ENCODE measurements at regions of chr9 and their contacts with region 1.

Region 1: DNA sequence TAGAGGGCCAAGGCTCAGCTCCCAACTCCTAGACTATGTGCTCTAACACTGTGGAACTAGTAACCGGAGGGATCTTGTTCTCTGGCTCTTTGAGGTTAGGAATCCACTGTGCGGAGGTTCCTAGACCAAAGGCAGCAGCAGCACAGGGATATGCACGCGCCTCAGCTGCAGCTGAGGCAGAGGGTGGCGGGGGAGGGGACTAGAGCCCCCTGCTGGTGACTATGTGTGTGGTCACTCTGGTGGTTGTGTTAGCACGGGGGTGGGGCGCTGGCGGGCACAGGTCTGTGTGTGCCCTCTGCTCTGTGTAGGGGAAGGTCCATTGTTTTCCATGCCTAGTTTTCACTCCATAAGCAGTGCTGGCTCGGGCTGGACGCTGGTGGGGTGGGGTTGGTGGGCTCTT is 458.0 kb upstream of the IZUMO3 start:
- DNase-seq: no peak
- H3K4me3 ChIP-seq: no peak overlapping the region
- H3K27ac ChIP-seq: no peak overlapping the region
- H3K4me1 ChIP-seq: no peaks in the 10 kb centered on the region
- H3K27me3 ChIP-seq: no peaks in the 10 kb centered on the region
- CTCF ChIP-seq: no peak
- EP300 ChIP-seq: no peak
- POLR2A ChIP-seq: no peak

Region 2: GRCh38 chr9:24516463-24516862 is 487.2 kb before region 1 on chr9:
- in situ Hi-C with region 1: no loop called
- intact Hi-C with region 1: no loop called
- DNase-seq: no peak
- H3K4me3 ChIP-seq: no peak overlapping the region
- H3K27ac ChIP-seq: no peak overlapping the region
- H3K4me1 ChIP-seq: no peaks in the 10 kb centered on the region
- H3K27me3 ChIP-seq: no peaks in the 10 kb centered on the region
- CTCF ChIP-seq: no peak
- EP300 ChIP-seq: no peak
- POLR2A ChIP-seq: no peak

Region 3: DNA sequence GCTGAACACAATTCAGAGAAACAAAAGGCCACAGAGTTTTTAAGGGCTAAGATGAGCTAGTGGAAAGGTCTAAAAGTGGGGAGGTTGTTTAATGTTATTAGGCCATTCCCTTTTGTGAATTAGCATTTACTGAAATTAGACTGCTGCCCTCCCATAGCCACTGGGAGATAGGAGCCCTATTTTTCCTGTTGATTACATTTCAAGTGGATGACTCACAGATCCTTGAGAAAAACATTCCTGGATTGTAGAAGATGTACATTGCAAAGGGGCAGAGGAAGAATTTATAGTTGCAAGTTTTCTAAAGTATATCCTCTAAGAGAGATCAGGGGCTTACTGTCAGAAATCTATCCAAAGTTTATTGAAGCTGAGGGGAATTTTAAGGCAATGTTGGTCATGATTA is 90.9 kb before region 1 on chr9:
- in situ Hi-C with region 1: loop called in 1 of 4 experiments (anchors 25 kb)
- intact Hi-C with region 1: no loop called
- DNase-seq: no peak
- H3K4me3 ChIP-seq: no peak overlapping the region
- H3K27ac ChIP-seq: no peak overlapping the region
- H3K4me1 ChIP-seq: no peaks in the 10 kb centered on the region
- H3K27me3 ChIP-seq: no peaks in the 10 kb centered on the region
- CTCF ChIP-seq: no peak
- EP300 ChIP-seq: no peak
- POLR2A ChIP-seq: no peak

Region 4: DNA sequence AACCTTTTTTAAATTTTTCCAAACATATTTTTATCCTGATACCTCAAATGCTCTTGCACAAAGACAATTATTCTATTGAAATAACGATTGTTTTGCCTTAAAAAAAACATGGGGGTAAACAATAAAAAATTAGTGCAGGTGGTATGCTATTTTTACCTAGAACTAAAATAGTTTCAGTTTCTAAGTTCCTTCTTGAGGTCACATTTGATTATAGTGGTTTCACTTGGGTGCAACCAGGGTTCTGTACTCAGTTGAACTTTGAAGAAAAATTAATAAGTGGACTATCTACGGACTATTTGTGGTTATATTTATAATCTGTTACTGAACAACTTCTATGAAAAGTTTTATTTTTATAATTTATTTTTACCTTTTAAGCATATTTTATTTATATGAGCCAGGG is 70.9 kb before region 1 on chr9:
- in situ Hi-C with region 1: no loop called
- intact Hi-C with region 1: no loop called
- DNase-seq: no peak
- H3K4me3 ChIP-seq: no peak overlapping the region
- H3K27ac ChIP-seq: no peak overlapping the region
- H3K4me1 ChIP-seq: no peaks in the 10 kb centered on the region
- H3K27me3 ChIP-seq: no peaks in the 10 kb centered on the region
- CTCF ChIP-seq: no peak
- EP300 ChIP-seq: no peak
- POLR2A ChIP-seq: no peak

Region 5: GRCh38 chr9:25094518-25094917 is 90.8 kb after region 1 on chr9:
- in situ Hi-C with region 1: no loop called
- intact Hi-C with region 1: no loop called
- DNase-seq: no peak
- H3K4me3 ChIP-seq: no peak overlapping the region
- H3K27ac ChIP-seq: no peak overlapping the region
- H3K4me1 ChIP-seq: no peaks in the 10 kb centered on the region
- H3K27me3 ChIP-seq: no peaks in the 10 kb centered on the region
- CTCF ChIP-seq: no peak
- EP300 ChIP-seq: no peak
- POLR2A ChIP-seq: no peak

Region 6: DNA sequence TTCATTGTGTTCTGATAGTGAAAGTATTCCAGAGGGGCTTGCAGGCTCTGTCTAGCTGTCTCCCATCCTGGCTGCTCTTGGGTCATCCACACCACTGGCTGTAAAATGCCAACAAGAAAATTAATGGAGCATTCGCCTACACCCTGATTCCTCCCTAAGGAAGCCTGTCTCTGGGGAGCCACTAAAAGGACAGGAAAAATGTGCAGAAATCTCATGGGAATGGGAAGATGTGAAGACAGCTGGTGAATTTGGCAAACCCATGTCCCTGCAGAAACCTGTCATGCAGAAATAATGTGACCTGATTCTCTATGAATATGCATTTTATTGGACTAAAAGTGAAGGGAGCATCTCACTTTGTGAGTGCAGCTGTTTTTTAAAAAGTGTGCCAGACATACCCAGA is 409.0 kb after region 1 on chr9:
- in situ Hi-C with region 1: no loop called
- intact Hi-C with region 1: no loop called
- DNase-seq: no peak
- H3K4me3 ChIP-seq: no peak overlapping the region
- H3K27ac ChIP-seq: no peak overlapping the region
- H3K4me1 ChIP-seq: no peaks in the 10 kb centered on the region
- H3K27me3 ChIP-seq: no peaks in the 10 kb centered on the region
- CTCF ChIP-seq: no peak
- EP300 ChIP-seq: no peak
- POLR2A ChIP-seq: no peak

Measured in transverse colon (tissue), 4 donors.